ENCODE measurements at regions of chr19 and their contacts with region 1.

Region 1: DNA sequence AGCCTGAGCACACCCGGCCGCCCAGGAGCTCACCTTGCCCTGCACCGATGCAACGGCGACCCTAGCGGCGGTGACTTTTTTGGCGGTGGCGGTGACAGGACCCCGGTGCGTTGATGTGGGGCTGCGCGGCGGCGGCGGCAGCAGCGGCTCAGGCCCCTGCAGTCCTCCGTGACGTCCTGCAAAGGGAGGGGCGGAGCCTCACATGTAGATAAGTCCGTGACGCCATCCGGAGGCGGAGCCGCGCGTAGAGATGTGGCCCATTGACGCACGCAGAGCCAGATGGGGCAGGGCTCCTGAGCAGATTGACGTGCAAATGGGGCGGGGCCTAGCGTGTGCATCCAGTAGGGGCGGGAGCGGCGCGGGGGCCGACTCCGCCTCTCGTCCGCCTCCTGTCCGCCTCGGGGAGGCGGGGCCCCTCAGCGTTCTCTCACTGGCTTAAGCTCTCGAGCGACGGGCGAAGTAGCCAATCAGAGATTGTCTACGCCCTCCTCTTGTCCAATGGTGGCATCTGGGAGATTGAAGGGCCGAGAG is at the start of gene RAB3A:
- DNase-seq: peak; percentile 99
- H3K4me3 Mint-ChIP-seq: peak within 1 kb of the TSS; percentile 94
- H3K27ac Mint-ChIP-seq: peak within 1 kb of the TSS; percentile 95
- H3K4me1 Mint-ChIP-seq: peaks cover 11% of the 10 kb centered on the region
- H3K27me3 Mint-ChIP-seq: peaks cover 2% of the 10 kb centered on the region
- total RNA-seq, gene RAB3A: 6.3 and 7.4 TPM in 2 replicates

Region 2: GRCh38 chr19:18251587-18252369 is 47.9 kb after region 1 on chr19:
- intact Hi-C with region 1: loop called (anchors 1 kb)
- DNase-seq: peak; percentile 71
- H3K4me3 Mint-ChIP-seq: no peak overlapping the region
- H3K27ac Mint-ChIP-seq: no peak overlapping the region
- H3K4me1 Mint-ChIP-seq: no peaks in the 10 kb centered on the region
- H3K27me3 Mint-ChIP-seq: peaks cover 22% of the 10 kb centered on the region

Measured in activated T-helper 2 cell treated with anti-CD3 and anti-CD28 coated beads, Interferon-gamma antibody, Interleukin-2, Interleukin-4, amounts not matched to agents 10 μg/mL and 5 μg/mL and 100 μg/mL, durations not matched to agents 14 hours and 24 hours and 36 hours (primary cell).